A549 (cell line): ENCODE measurements at regions of chr11 and their contacts with region 1.

Region 1: DNA sequence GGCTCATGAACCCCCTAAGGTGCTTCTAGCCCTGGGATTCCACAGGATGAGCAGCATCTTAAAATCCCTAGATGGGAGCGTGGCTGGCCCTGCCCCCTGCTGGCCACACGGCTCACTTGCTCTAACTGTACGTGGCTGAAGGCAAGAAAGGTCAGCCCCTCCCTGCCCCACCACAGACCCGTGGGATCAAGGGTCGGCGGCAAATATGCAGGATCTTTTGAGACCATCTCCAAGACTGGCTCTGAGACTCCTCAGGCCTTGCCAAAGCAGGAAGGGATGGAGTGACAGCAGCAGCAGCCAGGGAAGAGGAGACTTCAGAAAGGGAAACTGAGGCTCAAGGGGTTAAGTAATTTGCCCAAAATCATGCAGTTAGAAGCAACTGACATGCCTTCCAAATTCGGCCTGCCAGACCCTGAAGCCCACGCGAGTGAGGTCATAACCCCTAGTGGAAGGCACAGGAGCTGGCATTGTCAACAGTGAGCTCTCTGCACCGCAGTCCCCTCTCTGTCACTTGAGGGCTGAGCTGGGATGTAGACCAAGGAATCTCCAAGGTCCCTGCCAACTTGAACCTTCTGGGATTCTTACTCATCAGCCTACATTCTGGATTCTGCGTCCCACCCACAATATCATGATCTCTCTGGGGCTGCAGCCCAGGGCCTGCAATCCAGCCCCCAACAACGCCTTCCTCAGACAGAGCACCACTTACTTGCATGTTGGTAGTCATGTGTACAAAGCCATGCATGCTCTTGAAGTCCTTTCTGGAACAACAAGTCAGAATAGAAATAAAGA is 31.4 kb downstream of the CREB3L1 start:
- DNase-seq: peak; percentile 80 to 91
- ATAC-seq: peak; percentile 90 to 95
- H3K4me3 ChIP-seq: no peak overlapping the region
- H3K27ac ChIP-seq: peak overlapping the region in 1 of 2 experiments; percentile 44; a peak in 1 of 6 replicates
- H3K4me1 ChIP-seq: peaks cover 20% of the 10 kb centered on the region
- CTCF ChIP-seq: peak; percentile 90
- EP300 ChIP-seq: no peak
- POLR2A ChIP-seq: no peak
- RAD21 ChIP-seq: peak; percentile 93 to 94

Region 2: DNA sequence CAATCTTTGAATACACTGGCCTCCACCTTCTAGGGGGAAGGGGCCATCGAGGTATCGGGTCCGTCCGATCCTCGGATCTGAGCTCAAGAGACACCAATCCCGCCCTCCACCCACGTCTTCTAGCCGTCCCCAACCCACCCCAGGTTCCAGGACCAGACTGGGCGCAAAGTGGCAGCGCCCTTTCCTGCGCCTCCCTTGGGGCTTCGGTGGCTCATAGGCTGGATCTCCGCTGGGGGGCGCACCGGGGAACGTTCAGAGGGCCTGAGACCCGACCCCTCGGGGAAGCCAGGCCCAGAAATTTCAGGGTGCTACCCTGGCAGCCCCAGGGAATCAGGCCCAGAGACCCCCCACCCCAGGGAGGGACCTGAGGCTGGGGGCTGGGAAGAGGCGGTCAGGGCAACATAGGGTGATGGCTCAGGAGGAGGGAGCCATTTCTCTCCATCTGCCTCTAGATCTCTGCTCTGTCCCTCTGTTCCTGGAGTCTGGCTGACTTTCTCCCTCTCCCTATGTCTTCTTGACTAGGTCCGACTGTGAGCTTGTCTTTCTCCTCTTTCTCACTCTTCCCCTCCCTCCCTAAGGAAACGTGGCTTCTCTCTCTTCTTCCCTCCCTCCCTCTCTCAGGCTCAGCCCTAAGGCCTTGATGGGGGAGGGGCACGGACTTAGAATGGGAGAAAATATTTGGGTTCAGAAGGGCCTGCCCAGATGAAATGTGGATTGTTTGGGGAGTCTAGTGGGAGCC is 30.3 kb before region 1 on chr11:
- CTCF ChIA-PET with region 1: interaction called, 321 read pairs
- POLR2A ChIA-PET with region 1: no interaction called
- DNase-seq: no peak
- ATAC-seq: peak; percentile 49 to 75; a peak in 5 of 6 replicates
- H3K4me3 ChIP-seq: peak overlapping the region; percentile 53
- H3K27ac ChIP-seq: peak overlapping the region in 1 of 2 experiments; percentile 79; a peak in 3 of 6 replicates
- H3K4me1 ChIP-seq: peaks cover 43% of the 10 kb centered on the region
- CTCF ChIP-seq: peak; percentile 41
- EP300 ChIP-seq: no peak
- POLR2A ChIP-seq: no peak
- RAD21 ChIP-seq: peak; percentile 17 to 19; a peak in 2 of 5 replicates

Region 3: DNA sequence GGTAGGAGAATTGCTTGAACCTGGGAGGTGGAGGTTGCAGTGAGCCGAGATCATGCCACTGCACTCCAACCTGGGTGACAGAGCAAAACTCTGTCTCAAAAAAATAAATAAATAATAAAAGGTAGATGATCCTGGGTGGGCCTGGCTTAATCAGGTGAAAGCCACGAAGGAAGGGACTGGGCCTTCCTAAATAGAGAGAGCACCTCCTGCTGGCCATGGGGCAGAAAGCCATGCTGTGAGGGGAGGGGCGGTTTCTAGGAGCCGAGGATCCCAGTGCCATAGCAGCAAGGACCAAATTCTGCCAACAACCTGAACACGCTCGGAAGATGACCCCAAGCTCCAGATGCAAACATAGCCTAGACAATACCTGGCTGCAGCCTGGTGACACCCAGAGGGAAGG is 13.9 kb after region 1 on chr11:
- CTCF ChIA-PET with region 1: interaction called, 27 read pairs
- POLR2A ChIA-PET with region 1: no interaction called
- DNase-seq: peak in 1 of 2 experiments; percentile 51
- ATAC-seq: peak in 1 of 2 experiments; percentile 44; a peak in 2 of 6 replicates
- H3K4me3 ChIP-seq: no peak overlapping the region
- H3K27ac ChIP-seq: no peak overlapping the region
- H3K4me1 ChIP-seq: no peaks in the 10 kb centered on the region
- CTCF ChIP-seq: peak; percentile 13; the same call in 1 of the 3 replicates
- EP300 ChIP-seq: no peak
- POLR2A ChIP-seq: no peak
- RAD21 ChIP-seq: peak in 1 of 2 experiments; percentile 26; a peak in 2 of 5 replicates

Region 4: GRCh38 chr11:46338988-46339666 is 30.3 kb after region 1 on chr11:
- CTCF ChIA-PET with region 1: interaction called, 10 read pairs
- POLR2A ChIA-PET with region 1: interaction called, 3 read pairs
- DNase-seq: no peak
- ATAC-seq: peak in 1 of 2 experiments; percentile 58; a peak in 3 of 6 replicates
- H3K4me3 ChIP-seq: no peak overlapping the region
- H3K27ac ChIP-seq: peak overlapping the region in 1 of 2 experiments; percentile 52; a peak in 4 of 6 replicates
- H3K4me1 ChIP-seq: peaks cover 14% of the 10 kb centered on the region
- CTCF ChIP-seq: no peak
- EP300 ChIP-seq: no peak
- POLR2A ChIP-seq: no peak
- RAD21 ChIP-seq: no peak